Ascending aorta (tissue), 2 donors: ENCODE measurements at regions of chr12 and their contacts with region 1.

Region 1: GRCh38 chr12:16385782-16386646 is 38.6 kb downstream of the MGST1 start:
- DNase-seq: no peak
- H3K4me3 ChIP-seq: no peak overlapping the region
- H3K27ac ChIP-seq: no peak overlapping the region
- H3K4me1 ChIP-seq: no peaks in the 10 kb centered on the region
- H3K27me3 ChIP-seq: no peaks in the 10 kb centered on the region
- CTCF ChIP-seq: peak in 2 of 3 experiments; percentile 24 to 57

Region 2: GRCh38 chr12:16359512-16360491 is 26.2 kb before region 1 on chr12:
- intact Hi-C with region 1: no loop called
- DNase-seq: no peak
- H3K4me3 ChIP-seq: no peak overlapping the region
- H3K27ac ChIP-seq: no peak overlapping the region
- H3K4me1 ChIP-seq: no peaks in the 10 kb centered on the region
- H3K27me3 ChIP-seq: no peaks in the 10 kb centered on the region
- CTCF ChIP-seq: peak in 2 of 3 experiments; percentile 9 to 32

Region 3: DNA sequence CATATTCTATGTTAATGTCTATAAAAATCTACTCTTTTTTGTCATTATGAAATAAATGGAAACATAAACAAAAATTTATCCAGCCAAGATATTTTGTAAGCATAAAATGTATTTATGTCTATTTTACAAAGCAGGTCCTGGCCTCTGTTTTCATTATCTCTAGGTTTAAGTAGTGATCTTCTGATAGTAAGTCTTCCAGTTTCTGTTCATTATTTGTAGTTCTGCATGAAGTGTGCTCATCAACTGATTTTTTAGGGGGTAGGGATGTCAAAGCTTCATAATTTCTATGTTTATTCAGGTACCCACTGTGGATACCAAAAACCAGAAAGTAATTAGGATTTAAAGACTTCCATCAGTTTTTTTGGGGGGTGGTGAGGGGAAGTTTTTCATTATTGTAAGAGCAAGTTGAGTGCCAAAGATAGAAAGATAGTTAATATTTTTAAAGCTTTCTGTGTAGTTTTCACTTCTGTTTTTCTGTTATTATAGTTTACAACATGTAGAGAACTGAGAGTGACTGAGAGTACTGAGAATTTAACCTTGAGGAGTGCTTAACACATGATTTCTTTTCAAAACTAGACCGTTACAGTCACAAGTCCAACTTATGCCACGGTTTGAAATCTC is 250.5 kb after region 1 on chr12:
- intact Hi-C with region 1: no loop called
- DNase-seq: no peak
- H3K4me3 ChIP-seq: no peak overlapping the region
- H3K27ac ChIP-seq: no peak overlapping the region
- H3K4me1 ChIP-seq: no peaks in the 10 kb centered on the region
- H3K27me3 ChIP-seq: no peaks in the 10 kb centered on the region
- CTCF ChIP-seq: no peak

Region 4: DNA sequence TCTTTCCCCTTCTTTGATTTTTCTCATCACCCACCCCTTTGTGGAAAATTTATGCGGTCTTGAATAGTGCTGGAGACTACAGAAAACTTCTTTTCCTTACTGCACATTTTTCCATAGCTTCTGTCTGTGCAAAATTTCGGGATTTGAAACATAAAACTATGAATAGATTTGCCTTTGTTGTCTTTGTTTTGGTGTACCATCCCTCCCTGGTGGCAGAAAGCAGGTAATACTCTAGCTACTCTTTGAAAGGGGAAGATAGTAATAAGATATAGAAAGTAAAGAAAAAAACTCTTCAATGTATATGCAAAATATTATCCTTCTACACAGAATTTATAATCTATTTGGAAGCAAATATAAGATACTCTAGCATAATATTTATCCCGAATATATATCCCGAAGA is 299.1 kb after region 1 on chr12:
- intact Hi-C with region 1: loop called (anchors 10 kb)
- DNase-seq: no peak
- H3K4me3 ChIP-seq: no peak overlapping the region
- H3K27ac ChIP-seq: no peak overlapping the region
- H3K4me1 ChIP-seq: no peaks in the 10 kb centered on the region
- H3K27me3 ChIP-seq: no peaks in the 10 kb centered on the region
- CTCF ChIP-seq: peak in 1 of 3 experiments; percentile 28